ENCODE measurements at regions of chr16 and their contacts with region 1.

Region 1: DNA sequence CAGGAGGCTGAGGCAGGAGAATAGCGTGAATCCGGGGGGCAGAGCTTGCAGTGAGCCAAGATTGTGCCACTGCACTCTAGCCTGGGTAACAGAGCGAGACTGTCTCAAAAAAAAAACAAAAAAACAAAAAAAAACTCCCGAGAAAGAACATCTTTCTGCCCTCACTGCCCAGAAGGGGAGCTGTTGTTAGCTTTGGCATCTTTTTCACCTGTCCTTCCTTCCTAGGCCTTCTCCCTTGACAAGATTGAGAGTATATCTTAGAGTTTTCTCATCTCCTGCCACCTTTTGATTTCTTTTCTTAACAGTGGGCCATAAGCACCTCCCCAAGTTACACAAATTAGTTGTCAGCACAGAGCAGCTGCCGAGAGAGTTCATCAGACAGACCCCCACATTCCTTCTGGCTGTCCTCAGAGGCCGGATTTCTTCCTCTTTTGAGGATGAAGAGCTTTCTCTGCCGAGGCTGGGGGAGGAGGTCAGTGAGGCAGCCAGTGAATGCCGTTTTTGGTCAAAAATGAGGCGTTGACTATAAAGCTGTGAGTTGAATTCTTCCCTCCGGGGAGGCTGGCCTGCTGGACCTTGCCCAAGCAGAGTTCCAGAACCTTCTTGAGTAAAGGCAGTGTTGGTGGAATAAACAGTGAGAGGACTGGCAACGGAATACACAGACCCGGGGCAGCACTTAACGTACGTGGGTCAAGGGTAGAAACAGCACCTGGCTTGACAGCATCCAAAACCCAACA is 127.0 kb downstream of the ABCC6 start:
- DNase-seq: peak in 2 of 3 donors; percentile 58 to 60
- H3K4me3 ChIP-seq: no peak overlapping the region
- H3K27ac ChIP-seq: peak overlapping the region; percentile 50 to 63
- H3K4me1 ChIP-seq: peaks cover 0 to 54% (median 26%) of the 10 kb centered on the region in 4 experiments
- H3K27me3 ChIP-seq: no peaks in the 10 kb centered on the region

Region 2: DNA sequence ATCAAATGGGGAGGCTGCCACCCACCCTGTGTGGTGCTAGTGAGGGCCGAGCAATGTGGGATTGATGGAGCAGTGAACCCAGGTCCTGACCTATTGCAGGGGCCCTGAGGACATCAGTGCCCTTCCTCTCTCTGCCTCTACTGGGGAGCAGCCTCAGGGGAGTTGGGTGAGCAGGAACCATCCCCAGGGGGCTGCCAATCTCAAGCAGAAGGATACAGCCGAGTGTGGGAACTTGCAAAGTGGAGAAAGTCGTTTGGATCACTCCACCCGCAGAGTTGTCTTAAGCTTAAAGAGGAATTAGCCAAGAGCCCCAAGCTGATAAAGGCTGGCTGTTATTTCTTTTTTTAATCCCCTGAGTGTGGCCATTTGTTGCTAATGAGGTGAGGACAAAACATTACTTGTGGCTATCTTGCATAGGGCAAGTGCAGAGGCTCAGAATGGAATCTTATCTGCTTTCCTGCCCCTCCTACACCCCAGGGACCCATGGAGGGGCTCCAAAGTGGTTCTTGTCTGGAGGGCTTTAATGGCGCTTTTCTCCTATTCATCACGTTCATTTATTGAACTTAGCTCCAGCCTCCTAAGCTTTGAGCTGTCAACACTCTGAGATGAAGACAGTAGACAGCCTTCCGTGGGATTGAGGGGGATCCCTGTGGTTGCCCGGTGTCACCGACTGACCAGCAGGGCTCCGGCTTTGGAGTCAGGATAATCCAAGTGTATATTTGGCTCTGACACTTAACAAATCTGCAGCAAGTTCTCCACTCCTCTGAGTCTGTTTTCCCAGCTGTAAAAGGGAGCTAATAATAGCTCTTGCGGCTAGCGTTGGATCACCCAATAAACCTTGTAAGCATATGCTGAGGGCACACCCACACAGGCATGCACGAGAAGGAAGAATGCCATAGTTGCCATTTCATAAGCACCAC is 284.5 kb before region 1 on chr16:
- CTCF ChIA-PET with region 1: no interaction called
- POLR2A ChIA-PET with region 1: no interaction called
- DNase-seq: peak in 2 of 3 donors; percentile 34 to 67
- H3K4me3 ChIP-seq: no peak overlapping the region
- H3K27ac ChIP-seq: no peak overlapping the region
- H3K4me1 ChIP-seq: peaks cover 3 to 28% (median 11%) of the 10 kb centered on the region in 4 experiments
- H3K27me3 ChIP-seq: no peaks in the 10 kb centered on the region

Region 3: GRCh38 chr16:16083421-16084156 is 12.7 kb before region 1 on chr16:
- CTCF ChIA-PET with region 1: interaction called, 12 read pairs
- POLR2A ChIA-PET with region 1: no interaction called
- DNase-seq: peak; percentile 37 to 77 (median 75)
- H3K4me3 ChIP-seq: no peak overlapping the region
- H3K27ac ChIP-seq: peak overlapping the region in 1 of 2 experiments; percentile 49
- H3K4me1 ChIP-seq: peaks cover 2 to 37% (median 13%) of the 10 kb centered on the region in 4 experiments
- H3K27me3 ChIP-seq: no peaks in the 10 kb centered on the region

Region 4: DNA sequence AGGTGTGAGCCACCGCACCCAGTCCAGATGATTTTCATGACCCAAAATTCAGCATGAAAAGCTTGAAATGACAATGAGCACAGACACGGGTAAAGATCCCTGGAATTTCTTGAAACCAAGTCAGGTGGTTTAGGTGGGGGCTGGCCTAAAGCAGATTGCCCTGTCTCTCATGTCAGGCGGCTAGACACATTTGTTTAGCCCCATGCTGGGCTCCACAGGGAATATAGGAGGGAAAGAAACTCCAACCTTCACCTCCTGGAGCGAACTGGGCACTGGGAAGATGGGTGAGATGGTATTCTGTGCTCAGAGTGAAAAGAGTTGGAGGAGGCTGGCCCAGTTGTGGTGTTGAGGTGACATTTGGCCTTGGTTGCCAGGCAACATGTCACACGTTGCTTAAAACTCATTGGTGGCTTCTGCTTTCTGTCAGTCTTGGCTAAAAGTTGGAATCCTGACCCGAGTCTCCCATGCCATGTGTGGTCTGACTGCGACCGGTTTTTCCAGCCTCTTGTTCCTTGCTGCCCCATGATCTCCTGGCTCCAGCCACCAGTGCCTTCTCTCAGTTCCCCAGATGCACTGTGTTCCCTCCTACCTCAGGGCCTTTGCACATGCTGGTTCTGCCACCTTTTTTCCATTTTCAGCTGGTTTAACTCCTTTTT is 13.3 kb after region 1 on chr16:
- CTCF ChIA-PET with region 1: interaction called, 17 read pairs
- POLR2A ChIA-PET with region 1: no interaction called
- DNase-seq: peak in 2 of 3 donors; percentile 47 to 51
- H3K4me3 ChIP-seq: no peak overlapping the region
- H3K27ac ChIP-seq: peak overlapping the region in 1 of 2 experiments; percentile 71
- H3K4me1 ChIP-seq: peaks cover 0 to 12% (median 2%) of the 10 kb centered on the region in 4 experiments
- H3K27me3 ChIP-seq: no peaks in the 10 kb centered on the region

Region 5: GRCh38 chr16:16120382-16121184 is 24.3 kb after region 1 on chr16:
- CTCF ChIA-PET with region 1: interaction called, 4 read pairs
- POLR2A ChIA-PET with region 1: interaction called, 13 read pairs
- DNase-seq: peak; percentile 95 to 99 (median 97)
- H3K4me3 ChIP-seq: peak overlapping the region in 6 of 7 experiments; percentile 25 to 61 (median 52)
- H3K27ac ChIP-seq: peak overlapping the region; percentile 98 to 99
- H3K4me1 ChIP-seq: peaks cover 3 to 40% (median 29%) of the 10 kb centered on the region in 4 experiments
- H3K27me3 ChIP-seq: no peaks in the 10 kb centered on the region

Measured in common myeloid progenitor, CD34-positive (primary cell).